HEK293 (cell line): ENCODE measurements at regions of chr6 and their contacts with region 1.

Region 1: GRCh38 chr6:131909408-131910218 is 41.6 kb downstream of the CCN2 start:
- H3K4me3 ChIP-seq: no peak overlapping the region
- H3K27ac ChIP-seq: no peak overlapping the region
- H3K4me1 ChIP-seq: no peaks in the 10 kb centered on the region
- CTCF ChIP-seq: peak; percentile 26; the same call in 1 of the 2 replicates

Region 2: GRCh38 chr6:131782764-131783163 is 126.8 kb before region 1 on chr6:
- CTCF ChIA-PET with region 1: interaction called, 15 read pairs
- POLR2A ChIA-PET with region 1: no interaction called
- H3K4me3 ChIP-seq: no peak overlapping the region
- H3K27ac ChIP-seq: no peak overlapping the region
- H3K4me1 ChIP-seq: no peaks in the 10 kb centered on the region
- CTCF ChIP-seq: 0 out of 2 replicates have a peak, but pooled peaks have one; percentile 27